ENCODE measurements at regions of chr17 and their contacts with region 1.

Region 1: GRCh38 chr17:78176548-78177025 is 8.2 kb downstream of the SYNGR2 start:
- DNase-seq: peak; percentile 78
- H3K4me3 Mint-ChIP-seq: no peak overlapping the region
- H3K27ac Mint-ChIP-seq: no peak overlapping the region
- H3K4me1 Mint-ChIP-seq: peaks cover 71% of the 10 kb centered on the region
- H3K27me3 Mint-ChIP-seq: no peaks in the 10 kb centered on the region

Region 2: GRCh38 chr17:78026381-78026780 is 150.2 kb before region 1 on chr17:
- CTCF ChIA-PET with region 1: no interaction called
- POLR2A ChIA-PET with region 1: no interaction called
- DNase-seq: no peak
- H3K4me3 Mint-ChIP-seq: no peak overlapping the region
- H3K27ac Mint-ChIP-seq: no peak overlapping the region
- H3K4me1 Mint-ChIP-seq: peaks cover 21% of the 10 kb centered on the region
- H3K27me3 Mint-ChIP-seq: no peaks in the 10 kb centered on the region

Region 3: DNA sequence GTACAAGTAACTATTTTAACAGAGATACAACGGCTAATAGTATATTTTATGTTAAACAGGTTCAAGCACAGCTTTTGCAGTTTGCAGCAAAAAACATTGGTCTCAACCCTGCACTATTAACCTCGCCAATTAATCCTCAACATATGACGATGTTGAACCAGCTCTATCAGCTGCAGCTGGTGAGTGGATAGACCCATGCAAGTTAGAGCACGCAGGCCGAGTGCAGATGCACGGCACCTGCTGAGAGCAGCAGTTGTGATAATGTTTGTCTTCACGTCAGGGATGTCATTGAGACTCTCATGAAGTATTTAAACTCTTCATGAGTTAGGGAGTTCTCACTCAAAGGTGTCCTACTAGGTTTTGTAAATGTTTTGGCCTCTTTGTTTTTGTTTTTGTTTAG is 93.6 kb before region 1 on chr17:
- CTCF ChIA-PET with region 1: interaction called, 15 read pairs
- POLR2A ChIA-PET with region 1: no interaction called
- DNase-seq: no peak
- H3K4me3 Mint-ChIP-seq: no peak overlapping the region
- H3K27ac Mint-ChIP-seq: no peak overlapping the region
- H3K4me1 Mint-ChIP-seq: peaks cover 10% of the 10 kb centered on the region
- H3K27me3 Mint-ChIP-seq: no peaks in the 10 kb centered on the region

Region 4: DNA sequence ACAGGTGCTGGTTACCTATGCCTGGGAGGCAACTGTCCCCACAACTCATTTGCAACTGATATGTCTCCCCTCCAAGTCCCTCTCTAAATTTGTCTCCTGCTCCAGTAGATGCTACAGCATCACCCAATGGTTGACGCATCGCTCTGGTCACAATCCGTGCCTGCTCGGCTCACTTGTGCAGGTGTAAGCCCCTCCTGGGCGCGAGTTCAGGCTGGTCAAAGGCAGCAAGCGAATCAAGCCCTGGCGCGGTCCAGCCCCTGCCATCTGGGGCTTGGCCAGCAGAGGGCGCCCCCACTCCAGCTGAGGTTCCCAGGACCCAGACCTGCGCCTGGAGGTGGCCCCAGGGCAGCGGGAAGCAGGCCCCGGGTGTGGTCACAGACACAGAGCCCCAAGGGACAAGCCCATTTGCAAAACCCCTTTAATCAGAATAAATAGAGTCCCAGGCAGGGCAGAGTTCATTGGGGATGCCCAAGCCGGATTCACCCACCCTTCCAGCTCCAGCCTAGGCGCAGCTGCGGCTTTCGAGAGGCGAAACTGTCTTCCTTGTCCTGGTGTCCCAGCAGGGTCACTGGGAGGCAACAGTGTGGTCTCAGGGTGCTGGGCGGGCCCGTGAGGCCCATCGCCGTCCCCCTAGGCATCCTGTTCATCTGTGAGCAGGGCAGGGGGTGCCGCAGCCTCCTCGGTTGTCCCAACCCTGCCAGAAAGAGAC is 63.9 kb before region 1 on chr17:
- CTCF ChIA-PET with region 1: interaction called, 13 read pairs
- POLR2A ChIA-PET with region 1: no interaction called
- DNase-seq: peak; percentile 77
- H3K4me3 Mint-ChIP-seq: no peak overlapping the region
- H3K27ac Mint-ChIP-seq: peak overlapping the region; percentile 83
- H3K4me1 Mint-ChIP-seq: peaks cover 41% of the 10 kb centered on the region
- H3K27me3 Mint-ChIP-seq: no peaks in the 10 kb centered on the region

Region 5: DNA sequence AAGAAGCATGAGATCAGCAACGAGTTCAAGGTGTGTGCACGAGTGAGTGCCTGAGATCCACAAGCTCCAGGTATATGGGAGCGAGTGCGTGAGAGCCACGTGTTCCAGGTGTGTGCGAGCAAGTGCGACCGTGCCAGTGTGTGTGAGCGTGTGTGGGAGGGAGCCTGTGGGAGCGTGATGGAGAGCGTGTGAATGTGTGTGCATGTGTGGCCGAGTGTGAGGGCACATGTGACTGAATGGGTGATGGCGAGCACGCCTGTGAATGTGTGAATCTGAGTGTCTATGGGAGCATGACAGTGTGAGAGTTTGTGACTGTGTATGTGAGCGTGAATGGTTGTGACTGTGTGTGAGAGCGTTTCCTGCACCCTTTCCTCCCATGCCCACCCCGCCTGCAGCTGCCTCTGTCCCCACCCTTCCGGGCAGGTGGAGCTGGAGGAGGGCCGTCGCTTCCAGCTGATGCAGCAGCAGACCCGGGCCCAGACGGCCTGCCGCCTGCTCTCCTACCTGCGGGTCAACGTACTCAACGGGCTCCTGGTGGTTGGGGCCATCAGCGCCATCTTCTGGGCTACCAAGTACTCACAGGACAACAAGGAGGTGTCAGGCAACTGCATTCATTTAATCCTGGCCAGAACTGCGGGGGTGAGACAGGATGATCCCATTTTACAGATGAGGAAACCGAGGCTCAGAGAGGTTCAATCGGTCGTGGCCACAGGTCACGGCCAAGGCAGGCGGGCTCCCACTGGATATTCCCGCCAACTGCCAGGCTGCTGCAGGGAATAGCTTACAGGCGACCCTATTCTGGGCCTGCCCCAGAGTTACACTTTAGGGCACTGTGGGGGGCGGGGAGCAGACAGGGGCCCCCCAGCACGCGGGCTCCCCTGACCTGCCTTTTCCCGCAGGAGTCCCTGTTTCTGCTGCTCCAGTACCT is 42.4 kb before region 1 on chr17:
- CTCF ChIA-PET with region 1: interaction called, 14 read pairs
- POLR2A ChIA-PET with region 1: no interaction called
- DNase-seq: peak; percentile 90
- H3K4me3 Mint-ChIP-seq: peak overlapping the region; percentile 78
- H3K27ac Mint-ChIP-seq: peak overlapping the region; percentile 85
- H3K4me1 Mint-ChIP-seq: peaks cover 71% of the 10 kb centered on the region
- H3K27me3 Mint-ChIP-seq: no peaks in the 10 kb centered on the region

Region 6: GRCh38 chr17:78186692-78187595 is 10.4 kb after region 1 on chr17 and contains the starts of genes AFMID and TK1:
- CTCF ChIA-PET with region 1: interaction called, 17 read pairs
- POLR2A ChIA-PET with region 1: interaction called, 10 read pairs
- DNase-seq: peak; percentile 92
- H3K4me3 Mint-ChIP-seq: peak within 1 kb of the TSS; percentile 78
- H3K27ac Mint-ChIP-seq: peak within 1 kb of the TSS; percentile 88
- H3K4me1 Mint-ChIP-seq: peaks cover 45% of the 10 kb centered on the region
- H3K27me3 Mint-ChIP-seq: no peaks in the 10 kb centered on the region
- total RNA-seq, gene AFMID: 16.8 to 17.0 TPM
- total RNA-seq, gene TK1: 121 to 136 TPM